B cell (primary cell): ENCODE measurements at regions of chr11 and their contacts with region 1.

Region 1: DNA sequence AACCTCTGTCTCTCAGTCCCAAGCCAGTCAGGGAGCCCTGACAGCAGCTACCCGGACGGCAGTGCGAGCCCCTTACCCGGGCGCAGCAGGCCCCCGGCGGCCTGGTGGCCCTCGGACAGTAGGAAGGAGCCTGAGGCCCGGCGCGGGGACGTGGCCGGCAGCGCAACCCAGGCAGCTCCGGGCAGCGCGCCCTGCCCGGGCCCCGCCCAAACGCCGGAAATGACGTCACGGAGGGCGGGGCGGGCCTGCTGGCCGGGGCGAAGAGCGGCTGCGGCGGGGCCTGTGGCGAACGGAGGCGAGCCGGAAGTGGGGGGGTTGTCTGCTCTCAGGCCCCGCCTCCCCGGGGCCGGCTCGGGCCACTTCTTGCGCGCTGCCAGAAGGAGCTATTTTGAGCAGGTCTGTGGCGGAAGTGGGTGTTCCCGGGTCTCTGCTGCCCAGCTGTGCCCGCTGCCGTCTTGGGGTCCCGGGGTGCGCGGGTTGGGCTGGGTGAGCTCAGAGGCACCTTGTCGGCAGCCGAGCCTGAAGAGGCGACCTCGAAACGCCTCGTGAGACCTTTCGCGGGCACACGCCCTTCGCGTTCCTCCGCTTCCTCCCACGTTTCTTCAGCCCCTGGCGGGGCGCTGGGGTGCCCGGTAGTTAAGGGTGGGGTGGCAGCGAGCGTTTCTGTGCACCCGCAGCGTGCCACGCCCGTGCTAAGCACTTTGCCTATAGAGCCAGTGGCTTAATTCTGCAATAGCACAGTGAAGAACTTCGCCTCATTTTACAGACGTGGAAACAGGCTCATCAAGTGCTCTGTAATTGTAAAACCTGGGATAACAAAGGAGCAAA is at the start of gene C11orf24:
- DNase-seq: peak; percentile 98
- ATAC-seq: peak; percentile 74
- H3K4me3 ChIP-seq: peak within 1 kb of the TSS; percentile 62 to 99 (median 98)
- H3K4me3 Mint-ChIP-seq: peak within 1 kb of the TSS; percentile 91
- H3K27ac ChIP-seq: peak within 1 kb of the TSS; percentile 98
- H3K27ac Mint-ChIP-seq: peak within 1 kb of the TSS; percentile 97
- H3K4me1 ChIP-seq: peaks cover 58 to 70% of the 10 kb centered on the region in 2 donors
- H3K4me1 Mint-ChIP-seq: peaks cover 74% of the 10 kb centered on the region
- H3K27me3 ChIP-seq: no peaks in the 10 kb centered on the region
- H3K27me3 Mint-ChIP-seq: no peaks in the 10 kb centered on the region
- CTCF ChIP-seq: no peak
- total RNA-seq, gene C11orf24: 81.8 and 88.6 TPM in 2 replicates

Region 2: GRCh38 chr11:68010090-68011041 is 261.6 kb before region 1 on chr11 and contains the start of gene ALDH3B1:
- CTCF ChIA-PET with region 1: no interaction called
- POLR2A ChIA-PET with region 1: interaction called, 3 read pairs
- intact Hi-C with region 1: loop called (anchors 5 kb)
- DNase-seq: peak; percentile 51
- ATAC-seq: peak; percentile 76
- H3K4me3 ChIP-seq: peak within 1 kb of the TSS in 4 of 5 experiments; percentile 0 to 41 (median 24)
- H3K4me3 Mint-ChIP-seq: peak within 1 kb of the TSS; percentile 76
- H3K27ac ChIP-seq: peak within 1 kb of the TSS; percentile 25 to 53
- H3K27ac Mint-ChIP-seq: peak within 1 kb of the TSS; percentile 86
- H3K4me1 ChIP-seq: peaks cover 45 to 59% of the 10 kb centered on the region in 2 donors
- H3K4me1 Mint-ChIP-seq: peaks cover 44% of the 10 kb centered on the region
- H3K27me3 ChIP-seq: no peaks in the 10 kb centered on the region
- H3K27me3 Mint-ChIP-seq: no peaks in the 10 kb centered on the region
- CTCF ChIP-seq: no peak
- total RNA-seq, gene ALDH3B1: 0.39 and 0.81 TPM in 2 replicates

Region 3: GRCh38 chr11:68121067-68121899 is 150.7 kb before region 1 on chr11 and contains the start of gene CHKA:
- CTCF ChIA-PET with region 1: no interaction called
- POLR2A ChIA-PET with region 1: no interaction called
- intact Hi-C with region 1: loop called (anchors 1 kb)
- DNase-seq: peak; percentile 94
- ATAC-seq: peak; percentile 93
- H3K4me3 ChIP-seq: peak within 1 kb of the TSS; percentile 65 to 78 (median 66)
- H3K4me3 Mint-ChIP-seq: peak within 1 kb of the TSS; percentile 95
- H3K27ac ChIP-seq: peak within 1 kb of the TSS; percentile 82 to 86
- H3K27ac Mint-ChIP-seq: peak within 1 kb of the TSS; percentile 95
- H3K4me1 ChIP-seq: peaks cover 21 to 29% of the 10 kb centered on the region in 2 donors
- H3K4me1 Mint-ChIP-seq: peaks cover 27% of the 10 kb centered on the region
- H3K27me3 ChIP-seq: no peaks in the 10 kb centered on the region
- H3K27me3 Mint-ChIP-seq: no peaks in the 10 kb centered on the region
- CTCF ChIP-seq: no peak
- total RNA-seq, gene CHKA: 20.6 and 24.9 TPM in 2 replicates

Region 4: GRCh38 chr11:68282141-68282970 is 10.4 kb after region 1 on chr11:
- CTCF ChIA-PET with region 1: interaction called, 4 read pairs
- POLR2A ChIA-PET with region 1: interaction called, 14 read pairs
- intact Hi-C with region 1: loop called (anchors 1 kb)
- DNase-seq: peak; percentile 50
- ATAC-seq: peak; percentile 79
- H3K4me3 ChIP-seq: peak overlapping the region; percentile 2 to 44 (median 37)
- H3K4me3 Mint-ChIP-seq: peak overlapping the region; percentile 82
- H3K27ac ChIP-seq: peak overlapping the region; percentile 1 to 63
- H3K27ac Mint-ChIP-seq: peak overlapping the region; percentile 79
- H3K4me1 ChIP-seq: peaks cover 16 to 17% of the 10 kb centered on the region in 2 donors
- H3K4me1 Mint-ChIP-seq: peaks cover 28% of the 10 kb centered on the region
- H3K27me3 ChIP-seq: no peaks in the 10 kb centered on the region
- H3K27me3 Mint-ChIP-seq: no peaks in the 10 kb centered on the region
- CTCF ChIP-seq: no peak

Region 5: GRCh38 chr11:68297812-68298658 is 26.0 kb after region 1 on chr11:
- CTCF ChIA-PET with region 1: interaction called, 275 read pairs
- POLR2A ChIA-PET with region 1: interaction called, 44 read pairs
- intact Hi-C with region 1: loop called (anchors 1 kb)
- DNase-seq: peak; percentile 85
- ATAC-seq: peak; percentile 95
- H3K4me3 ChIP-seq: no peak overlapping the region
- H3K4me3 Mint-ChIP-seq: peak overlapping the region; percentile 69
- H3K27ac ChIP-seq: no peak overlapping the region
- H3K27ac Mint-ChIP-seq: peak overlapping the region; percentile 67
- H3K4me1 ChIP-seq: peaks cover 40 to 45% of the 10 kb centered on the region in 2 donors
- H3K4me1 Mint-ChIP-seq: peaks cover 36% of the 10 kb centered on the region
- H3K27me3 ChIP-seq: no peaks in the 10 kb centered on the region
- H3K27me3 Mint-ChIP-seq: no peaks in the 10 kb centered on the region
- CTCF ChIP-seq: peak; percentile 95

Region 6: DNA sequence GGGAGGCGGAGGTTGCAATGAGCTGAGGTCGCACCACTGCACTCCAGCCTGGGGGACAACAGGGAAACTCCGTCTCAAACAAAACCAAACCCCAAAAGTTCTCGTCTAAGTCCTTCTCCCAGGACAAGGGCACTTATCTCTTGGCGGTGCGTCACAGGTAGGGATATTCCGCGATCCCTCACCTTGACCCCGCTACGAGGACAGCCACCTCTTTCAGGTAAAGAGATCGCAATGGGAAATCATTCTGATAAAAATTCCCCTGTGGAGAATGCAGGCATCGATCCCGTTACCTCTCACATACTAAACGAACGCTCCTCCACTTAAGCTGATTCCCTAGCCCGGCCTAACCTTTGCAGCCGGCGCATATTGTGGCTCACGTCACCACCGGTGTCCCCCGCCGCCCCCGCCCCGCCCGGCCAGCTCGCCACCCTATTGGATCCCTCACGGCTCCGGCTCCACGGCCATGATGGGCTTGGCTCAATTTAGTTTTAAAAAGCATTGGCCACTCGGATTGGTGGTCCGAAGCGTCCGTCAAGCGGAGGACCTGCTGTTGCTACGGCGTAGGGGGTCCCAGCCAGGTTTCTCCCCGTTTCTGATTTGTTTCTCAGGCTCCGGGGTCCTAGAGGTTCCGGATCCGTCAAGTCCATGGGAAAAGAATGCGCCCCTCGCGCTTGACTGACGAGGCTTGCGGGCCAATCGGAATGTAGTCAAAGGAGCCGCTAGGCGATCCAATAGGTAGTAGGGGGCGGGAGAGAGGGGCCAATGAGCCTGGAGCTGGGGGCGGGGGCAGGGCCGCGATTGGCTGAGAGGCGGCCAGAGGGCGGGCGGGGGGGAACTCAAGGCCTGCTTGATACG is 188.1 kb after region 1 on chr11:
- CTCF ChIA-PET with region 1: no interaction called
- POLR2A ChIA-PET with region 1: interaction called, 5 read pairs
- intact Hi-C with region 1: loop called (anchors 1 kb)
- DNase-seq: peak; percentile 97
- ATAC-seq: peak; percentile 90
- H3K4me3 ChIP-seq: peak overlapping the region; percentile 82 to 96 (median 90)
- H3K4me3 Mint-ChIP-seq: peak overlapping the region; percentile 96
- H3K27ac ChIP-seq: peak overlapping the region; percentile 95 to 96
- H3K27ac Mint-ChIP-seq: peak overlapping the region; percentile 97
- H3K4me1 ChIP-seq: peaks cover 29 to 31% of the 10 kb centered on the region in 2 donors
- H3K4me1 Mint-ChIP-seq: peaks cover 40% of the 10 kb centered on the region
- H3K27me3 ChIP-seq: no peaks in the 10 kb centered on the region
- H3K27me3 Mint-ChIP-seq: no peaks in the 10 kb centered on the region
- CTCF ChIP-seq: no peak

Region 7: DNA sequence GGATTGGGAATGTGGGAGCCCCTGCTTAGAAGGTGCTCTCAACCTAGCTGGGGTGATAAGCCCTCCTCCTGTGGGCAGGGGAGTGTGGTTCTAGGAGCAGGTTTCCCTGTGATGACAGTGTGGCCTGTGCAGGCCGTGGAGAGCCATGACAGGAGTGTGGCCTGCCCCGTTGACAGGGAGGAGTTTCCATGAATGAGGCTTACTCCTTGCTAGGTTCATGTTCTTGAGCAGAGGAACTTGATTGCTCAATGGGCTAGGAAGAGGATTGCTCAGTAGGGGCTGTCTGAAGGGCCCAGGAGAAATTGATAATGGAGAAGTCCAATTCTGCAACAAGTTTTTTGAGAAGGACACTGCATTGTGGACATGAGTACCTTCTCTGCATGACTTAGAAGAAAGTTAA is 280.5 kb after region 1 on chr11:
- CTCF ChIA-PET with region 1: no interaction called
- POLR2A ChIA-PET with region 1: no interaction called
- intact Hi-C with region 1: no loop called
- DNase-seq: no peak
- ATAC-seq: no peak
- H3K4me3 ChIP-seq: no peak overlapping the region
- H3K4me3 Mint-ChIP-seq: no peak overlapping the region
- H3K27ac ChIP-seq: no peak overlapping the region
- H3K27ac Mint-ChIP-seq: no peak overlapping the region
- H3K4me1 ChIP-seq: peaks cover 0 to 4% of the 10 kb centered on the region in 2 donors
- H3K4me1 Mint-ChIP-seq: peaks cover 24% of the 10 kb centered on the region
- H3K27me3 ChIP-seq: no peaks in the 10 kb centered on the region
- H3K27me3 Mint-ChIP-seq: no peaks in the 10 kb centered on the region
- CTCF ChIP-seq: no peak